Pancreas (tissue), 10 donors: ENCODE measurements at regions of chr3 and their contacts with region 1.

Region 1: DNA sequence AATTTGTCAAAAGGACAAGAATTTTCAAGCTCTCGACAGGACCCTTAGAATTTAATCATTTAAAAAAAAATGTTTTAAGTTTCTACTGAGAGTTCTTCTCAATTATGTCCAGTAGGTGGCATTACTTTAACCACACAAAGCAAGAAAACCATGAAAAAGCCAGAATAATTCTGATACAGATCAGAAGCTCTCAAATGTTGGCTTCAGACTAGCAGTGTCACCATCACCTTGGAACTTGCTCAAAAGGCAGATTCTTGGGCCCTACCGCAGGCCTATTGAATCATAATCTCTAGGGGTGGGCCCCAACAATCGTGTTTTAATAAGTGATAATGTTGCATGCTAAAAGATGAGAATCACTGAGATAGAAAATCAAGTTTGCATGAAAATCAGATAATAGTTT is 99.5 kb upstream of the KCNMB2 start:
- DNase-seq: no peak
- ATAC-seq: peak; percentile 46 to 70 (median 62)
- H3K4me3 ChIP-seq: no peak overlapping the region
- H3K27ac ChIP-seq: no peak overlapping the region
- H3K4me1 ChIP-seq: no peaks in the 10 kb centered on the region
- H3K27me3 ChIP-seq: no peaks in the 10 kb centered on the region
- CTCF ChIP-seq: peak in 3 of 4 donors; percentile 41 to 56 (median 43)

Region 2: GRCh38 chr3:178966299-178967176 is 529.8 kb after region 1 on chr3:
- intact Hi-C with region 1: loop called in 2 of 3 experiments (anchors 10 kb)
- DNase-seq: peak in 3 of 6 donors; percentile 11 to 23 (median 17)
- ATAC-seq: peak; percentile 79 to 91 (median 88)
- H3K4me3 ChIP-seq: peak overlapping the region in 2 of 4 donors; percentile 1 to 8
- H3K27ac ChIP-seq: peak overlapping the region in 2 of 4 donors; percentile 6 to 38
- H3K4me1 ChIP-seq: peaks cover 0 to 13% (median 5%) of the 10 kb centered on the region in 3 donors
- H3K27me3 ChIP-seq: no peaks in the 10 kb centered on the region
- CTCF ChIP-seq: peak in 2 of 4 donors; percentile 36 to 45